Common myeloid progenitor, CD34-positive (primary cell): ENCODE measurements at regions of chr6 and their contacts with region 1.

Region 1: DNA sequence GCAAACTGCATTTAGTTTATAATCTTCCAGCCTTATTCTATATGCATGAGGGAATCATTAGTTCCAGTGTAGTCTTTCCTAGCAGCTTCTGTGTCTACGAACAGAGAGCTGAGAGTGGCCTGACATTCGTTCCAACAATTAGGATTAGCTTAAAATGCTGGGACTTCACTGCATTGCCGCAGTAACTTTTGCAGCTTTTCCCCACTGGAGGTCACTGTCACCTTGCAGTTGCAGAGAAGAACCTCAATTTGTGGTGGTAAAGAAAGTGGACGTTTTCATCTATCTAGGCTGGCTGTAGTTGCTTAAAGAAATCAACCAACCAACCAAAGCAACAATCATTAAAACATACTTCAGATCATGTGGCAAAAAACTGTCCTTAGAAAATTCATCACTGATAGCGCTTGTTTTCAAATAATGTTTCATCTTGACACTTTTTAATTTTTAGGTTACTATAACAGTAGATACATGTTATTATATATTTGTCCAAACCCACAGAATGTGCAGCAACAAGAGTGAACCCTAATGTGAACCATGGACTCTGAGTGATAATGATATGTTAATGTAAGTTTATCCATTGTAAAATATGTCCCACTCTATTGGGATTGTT is 12.2 kb downstream of the MYLK4 start:
- DNase-seq: peak; percentile 84 to 91 (median 88)
- H3K4me3 ChIP-seq: no peak overlapping the region
- H3K27ac ChIP-seq: no peak overlapping the region
- H3K4me1 ChIP-seq: peaks cover 9 to 38% (median 25%) of the 10 kb centered on the region in 4 experiments
- H3K27me3 ChIP-seq: no peaks in the 10 kb centered on the region

Region 2: DNA sequence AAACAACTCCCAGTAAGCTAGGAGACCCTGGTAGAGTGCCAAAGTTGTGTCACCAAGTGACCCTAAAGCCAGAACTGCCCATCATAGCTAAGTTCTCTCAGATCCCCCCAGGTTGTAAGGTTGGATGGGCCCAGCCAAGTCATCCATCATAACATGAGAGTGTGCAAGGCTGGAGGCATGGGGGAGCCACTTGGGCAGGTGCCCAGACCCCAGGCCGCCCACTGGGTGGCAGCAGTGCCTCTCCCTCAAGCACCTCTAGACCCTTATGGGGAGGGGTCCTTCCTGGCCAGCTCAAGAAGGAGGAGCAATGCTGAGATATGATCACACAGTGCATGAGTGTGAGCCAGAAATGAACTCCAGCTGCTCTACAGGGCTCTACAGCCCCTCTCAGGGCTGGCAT is 142.3 kb before region 1 on chr6:
- CTCF ChIA-PET with region 1: no interaction called
- POLR2A ChIA-PET with region 1: no interaction called
- DNase-seq: peak; percentile 22 to 51 (median 40)
- H3K4me3 ChIP-seq: no peak overlapping the region
- H3K27ac ChIP-seq: no peak overlapping the region
- H3K4me1 ChIP-seq: peaks cover 0 to 19% (median 7%) of the 10 kb centered on the region in 4 experiments
- H3K27me3 ChIP-seq: no peaks in the 10 kb centered on the region

Region 3: DNA sequence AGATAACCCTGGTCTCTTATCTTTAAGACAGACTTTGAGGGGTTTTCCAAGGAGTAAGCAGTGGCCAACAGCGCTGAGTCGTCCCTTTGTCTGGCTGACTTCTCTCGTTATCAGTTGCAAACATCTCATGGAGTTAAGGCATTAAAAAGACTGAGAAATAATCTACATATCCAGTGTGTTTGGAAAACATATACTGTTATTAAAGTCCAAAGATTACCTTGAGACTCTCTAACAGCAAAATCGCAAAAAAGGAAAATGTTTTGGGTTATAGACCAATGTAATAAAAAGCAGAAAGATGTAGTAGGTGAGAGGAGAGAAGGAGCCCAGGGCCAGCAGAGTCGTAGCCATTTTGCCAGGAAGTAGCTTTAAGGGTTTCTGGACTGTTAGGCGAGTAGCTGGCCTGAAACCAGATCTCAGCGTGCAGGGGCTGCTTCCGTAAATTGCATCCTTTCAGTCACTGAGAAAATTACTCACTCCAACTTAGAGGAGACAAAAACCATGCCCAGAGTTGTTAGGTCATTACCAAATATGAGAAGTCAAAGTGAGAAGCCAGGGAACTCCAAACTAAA is 12.4 kb before region 1 on chr6:
- CTCF ChIA-PET with region 1: interaction called, 67 read pairs
- POLR2A ChIA-PET with region 1: no interaction called
- DNase-seq: peak; percentile 74 to 92 (median 90)
- H3K4me3 ChIP-seq: no peak overlapping the region
- H3K27ac ChIP-seq: peak overlapping the region; percentile 46 to 75
- H3K4me1 ChIP-seq: peaks cover 7 to 56% (median 41%) of the 10 kb centered on the region in 4 experiments
- H3K27me3 ChIP-seq: no peaks in the 10 kb centered on the region

Region 4: DNA sequence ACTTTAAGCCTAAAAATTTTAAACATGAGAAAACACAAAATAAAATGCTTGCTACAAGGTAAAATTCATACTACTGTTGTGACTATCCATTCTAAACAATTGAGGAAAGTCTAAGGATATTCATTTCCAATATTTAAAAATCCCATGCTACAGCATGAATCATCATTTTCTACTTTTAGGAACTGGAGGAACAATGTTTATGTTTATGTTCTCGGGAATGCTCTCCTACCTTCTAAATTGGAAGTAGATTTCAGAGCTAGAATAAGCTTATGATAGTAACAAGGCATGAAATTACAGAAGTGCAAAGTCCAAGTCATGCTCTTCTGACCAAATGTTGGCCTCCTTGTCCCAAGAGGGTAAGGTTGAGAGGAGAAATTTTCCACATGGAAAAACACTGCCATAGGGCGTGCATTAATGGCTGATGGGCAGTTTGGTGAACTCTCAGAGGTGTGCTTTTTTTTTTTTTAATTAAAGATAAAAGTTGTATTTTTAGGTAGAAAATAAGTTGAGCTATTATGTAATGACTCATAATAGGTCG is 18.3 kb after region 1 on chr6:
- CTCF ChIA-PET with region 1: interaction called, 227 read pairs
- POLR2A ChIA-PET with region 1: interaction called, 3 read pairs
- DNase-seq: no peak
- H3K4me3 ChIP-seq: no peak overlapping the region
- H3K27ac ChIP-seq: no peak overlapping the region
- H3K4me1 ChIP-seq: peaks cover 5 to 29% (median 19%) of the 10 kb centered on the region in 4 experiments
- H3K27me3 ChIP-seq: no peaks in the 10 kb centered on the region

Region 5: DNA sequence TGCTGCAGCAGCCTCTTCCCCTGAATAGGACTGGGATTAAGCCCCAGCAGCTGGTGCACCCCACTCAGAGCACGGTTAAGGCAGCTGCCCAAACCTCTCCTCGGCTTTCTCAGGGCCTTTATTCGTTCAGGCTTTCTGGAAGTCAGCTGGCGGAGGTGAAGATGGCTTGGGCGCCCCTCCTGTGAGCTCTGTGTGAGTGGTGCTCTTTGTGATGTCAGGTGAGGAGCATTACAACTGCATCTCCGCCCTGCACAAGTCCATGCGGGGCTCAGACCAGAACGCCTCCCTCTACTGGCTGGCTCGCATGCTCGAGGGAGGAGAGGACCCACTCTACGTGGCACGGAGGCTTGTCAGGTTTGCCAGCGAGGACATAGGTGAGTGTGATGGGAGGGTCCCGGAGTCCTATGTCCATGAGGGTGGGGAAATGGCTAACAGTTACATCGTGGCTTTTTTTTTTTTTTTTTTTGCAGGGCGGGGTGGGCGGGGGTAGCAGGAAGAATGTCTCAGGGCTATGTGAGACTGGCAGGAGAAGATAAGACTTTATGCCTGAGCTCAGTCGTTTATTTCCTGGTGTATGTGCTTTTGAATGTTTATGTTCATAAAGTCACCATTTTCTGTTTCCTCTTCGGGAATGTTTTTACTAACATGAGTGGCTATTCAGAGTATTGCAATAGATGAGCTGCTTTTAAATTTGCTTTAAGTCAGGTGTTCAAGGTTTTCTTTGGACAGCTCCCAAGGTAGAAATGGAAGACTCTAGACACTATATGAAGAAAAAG is 44.9 kb after region 1 on chr6:
- CTCF ChIA-PET with region 1: interaction called, 50 read pairs
- POLR2A ChIA-PET with region 1: no interaction called
- DNase-seq: peak; percentile 75 to 95 (median 90)
- H3K4me3 ChIP-seq: peak overlapping the region in 3 of 7 experiments; percentile 30 to 49 (median 46)
- H3K27ac ChIP-seq: peak overlapping the region; percentile 71 to 78
- H3K4me1 ChIP-seq: peaks cover 15 to 55% (median 39%) of the 10 kb centered on the region in 4 experiments
- H3K27me3 ChIP-seq: no peaks in the 10 kb centered on the region

Region 6: GRCh38 chr6:2848851-2849250 is 110.4 kb after region 1 on chr6:
- CTCF ChIA-PET with region 1: interaction called, 20 read pairs
- POLR2A ChIA-PET with region 1: no interaction called
- DNase-seq: no peak
- H3K4me3 ChIP-seq: no peak overlapping the region
- H3K27ac ChIP-seq: no peak overlapping the region
- H3K4me1 ChIP-seq: peaks cover 7 to 16% (median 8%) of the 10 kb centered on the region in 4 experiments
- H3K27me3 ChIP-seq: no peaks in the 10 kb centered on the region